Mammary epithelial cell (primary cell): ENCODE measurements at regions of chr5 and their contacts with region 1.

Region 1: DNA sequence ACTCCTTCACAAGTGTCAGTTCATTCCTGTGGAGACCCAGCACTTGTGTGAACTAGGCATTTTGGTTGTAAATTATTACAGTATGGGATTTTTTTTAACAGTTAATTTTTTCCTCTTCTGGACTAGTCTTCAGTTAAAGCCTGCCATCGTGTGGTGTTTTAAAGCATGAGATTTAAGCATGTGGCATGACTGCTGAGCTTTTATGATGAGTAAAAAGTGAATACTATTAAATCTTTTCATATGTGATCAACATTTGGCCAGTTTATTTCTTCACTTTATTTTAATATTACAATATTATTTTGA is 25.0 kb downstream of the LMNB1 start:
- DNase-seq: peak; percentile 22
- H3K4me3 ChIP-seq: no peak overlapping the region
- H3K27ac ChIP-seq: no peak overlapping the region
- H3K4me1 ChIP-seq: peaks cover 5% of the 10 kb centered on the region
- H3K27me3 ChIP-seq: no peaks in the 10 kb centered on the region
- CTCF ChIP-seq: peak; percentile 20 to 47

Region 2: DNA sequence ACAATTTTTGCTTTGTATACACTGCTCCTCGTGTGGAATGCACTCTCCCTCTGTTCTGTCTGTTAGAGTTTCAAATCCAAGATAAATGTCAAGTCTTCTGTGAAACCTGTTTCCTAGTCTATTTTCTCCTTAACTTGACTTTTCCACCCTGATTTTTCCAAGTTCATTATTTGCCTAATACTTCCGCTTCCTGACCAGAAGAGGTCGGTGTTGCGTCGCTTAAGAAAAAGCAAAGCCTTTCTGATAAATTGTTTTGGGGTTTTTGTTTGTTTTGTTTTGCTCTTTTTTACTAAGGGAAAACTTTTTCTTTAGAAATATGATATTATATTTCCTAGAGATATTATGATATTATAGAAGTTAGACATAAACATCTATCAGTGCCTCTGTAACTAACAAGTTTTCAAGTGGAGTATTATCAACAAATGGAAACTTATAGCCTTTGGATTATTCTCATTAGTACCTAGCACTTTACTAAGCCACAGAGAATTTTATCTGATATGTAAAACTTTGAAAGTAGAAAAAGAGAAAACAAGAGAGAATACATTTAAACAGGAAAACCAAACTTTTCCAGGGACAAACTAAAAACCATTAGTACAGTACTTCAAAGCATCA is 145.4 kb before region 1 on chr5:
- CTCF ChIA-PET with region 1: no interaction called
- dilution Hi-C with region 1: no loop called
- in situ Hi-C with region 1: no loop called
- intact Hi-C with region 1: loop called (anchors 1 kb)
- DNase-seq: no peak
- H3K4me3 ChIP-seq: no peak overlapping the region
- H3K27ac ChIP-seq: no peak overlapping the region
- H3K4me1 ChIP-seq: no peaks in the 10 kb centered on the region
- H3K27me3 ChIP-seq: no peaks in the 10 kb centered on the region
- CTCF ChIP-seq: peak; percentile 87 to 88

Region 3: GRCh38 chr5:126676195-126676624 is 125.7 kb before region 1 on chr5:
- CTCF ChIA-PET with region 1: no interaction called
- dilution Hi-C with region 1: no loop called
- in situ Hi-C with region 1: no loop called
- intact Hi-C with region 1: loop called (anchors 1 kb)
- DNase-seq: peak; percentile 57
- H3K4me3 ChIP-seq: no peak overlapping the region
- H3K27ac ChIP-seq: no peak overlapping the region
- H3K4me1 ChIP-seq: no peaks in the 10 kb centered on the region
- H3K27me3 ChIP-seq: no peaks in the 10 kb centered on the region
- CTCF ChIP-seq: peak; percentile 74 to 84